AG04449 (cell line): ENCODE measurements at regions of chr5 and their contacts with region 1.

Region 1: GRCh38 chr5:140351609-140352334 is 5.4 kb upstream of the HBEGF start:
- DNase-seq: no peak
- H3K4me3 ChIP-seq: no peak overlapping the region
- CTCF ChIP-seq: peak; percentile 41

Region 2: GRCh38 chr5:139985733-139986132 is 366.0 kb before region 1 on chr5:
- CTCF ChIA-PET with region 1: no interaction called
- POLR2A ChIA-PET with region 1: no interaction called
- DNase-seq: peak; percentile 66
- H3K4me3 ChIP-seq: no peak overlapping the region
- CTCF ChIP-seq: no peak

Region 3: GRCh38 chr5:140220032-140220697 is 131.6 kb before region 1 on chr5:
- CTCF ChIA-PET with region 1: interaction called, 15 read pairs
- POLR2A ChIA-PET with region 1: interaction called, 4 read pairs
- DNase-seq: no peak
- H3K4me3 ChIP-seq: no peak overlapping the region
- CTCF ChIP-seq: no peak

Region 4: DNA sequence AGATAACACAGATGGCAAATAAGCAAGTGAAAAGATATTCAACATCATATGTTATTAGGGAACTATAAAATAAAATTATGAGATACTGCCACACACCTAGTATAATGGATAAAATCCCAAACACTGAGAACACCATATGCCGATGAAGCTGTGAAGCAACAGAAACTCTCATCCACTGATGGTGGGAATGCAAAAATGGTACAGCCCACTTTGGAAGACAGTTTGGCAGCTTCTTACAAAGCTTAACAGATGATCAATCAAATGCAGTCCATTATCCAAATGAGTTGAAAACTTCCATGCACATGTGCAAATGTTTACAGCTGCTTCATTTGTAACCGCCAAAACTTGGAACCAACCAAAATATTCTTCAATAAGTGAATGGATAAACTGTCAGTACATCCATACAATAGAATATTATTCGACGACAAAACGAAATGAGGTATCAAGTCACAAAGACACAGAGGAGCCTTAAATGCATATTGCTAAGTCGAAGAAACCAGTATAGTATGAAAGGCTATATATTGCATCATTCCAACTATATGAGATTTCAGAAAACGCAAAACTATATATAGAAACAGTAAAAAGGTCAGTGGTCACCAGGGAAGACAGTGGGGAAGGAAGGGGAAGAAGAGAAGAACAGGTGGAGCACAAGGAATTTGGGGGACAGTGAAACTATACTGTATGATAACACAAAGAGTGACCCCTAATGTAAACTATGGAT is 63.8 kb before region 1 on chr5:
- CTCF ChIA-PET with region 1: interaction called, 25 read pairs
- POLR2A ChIA-PET with region 1: interaction called, 6 read pairs
- DNase-seq: no peak
- H3K4me3 ChIP-seq: no peak overlapping the region
- CTCF ChIP-seq: no peak

Region 5: GRCh38 chr5:140302786-140303639 is 48.8 kb before region 1 on chr5 and contains the start of gene PFDN1:
- CTCF ChIA-PET with region 1: interaction called, 11 read pairs
- POLR2A ChIA-PET with region 1: interaction called, 12 read pairs
- DNase-seq: peak; percentile 69
- H3K4me3 ChIP-seq: peak within 1 kb of the TSS; percentile 83
- CTCF ChIP-seq: no peak

Region 6: GRCh38 chr5:140322751-140323731 is 28.7 kb before region 1 on chr5:
- CTCF ChIA-PET with region 1: interaction called, 28 read pairs
- POLR2A ChIA-PET with region 1: interaction called, 20 read pairs
- DNase-seq: peak; percentile 89
- H3K4me3 ChIP-seq: peak overlapping the region; percentile 21
- CTCF ChIP-seq: no peak

Region 7: GRCh38 chr5:140336388-140336787 is 15.4 kb before region 1 on chr5:
- CTCF ChIA-PET with region 1: interaction called, 34 read pairs
- POLR2A ChIA-PET with region 1: interaction called, 13 read pairs
- DNase-seq: no peak
- H3K4me3 ChIP-seq: no peak overlapping the region
- CTCF ChIP-seq: no peak

Region 8: DNA sequence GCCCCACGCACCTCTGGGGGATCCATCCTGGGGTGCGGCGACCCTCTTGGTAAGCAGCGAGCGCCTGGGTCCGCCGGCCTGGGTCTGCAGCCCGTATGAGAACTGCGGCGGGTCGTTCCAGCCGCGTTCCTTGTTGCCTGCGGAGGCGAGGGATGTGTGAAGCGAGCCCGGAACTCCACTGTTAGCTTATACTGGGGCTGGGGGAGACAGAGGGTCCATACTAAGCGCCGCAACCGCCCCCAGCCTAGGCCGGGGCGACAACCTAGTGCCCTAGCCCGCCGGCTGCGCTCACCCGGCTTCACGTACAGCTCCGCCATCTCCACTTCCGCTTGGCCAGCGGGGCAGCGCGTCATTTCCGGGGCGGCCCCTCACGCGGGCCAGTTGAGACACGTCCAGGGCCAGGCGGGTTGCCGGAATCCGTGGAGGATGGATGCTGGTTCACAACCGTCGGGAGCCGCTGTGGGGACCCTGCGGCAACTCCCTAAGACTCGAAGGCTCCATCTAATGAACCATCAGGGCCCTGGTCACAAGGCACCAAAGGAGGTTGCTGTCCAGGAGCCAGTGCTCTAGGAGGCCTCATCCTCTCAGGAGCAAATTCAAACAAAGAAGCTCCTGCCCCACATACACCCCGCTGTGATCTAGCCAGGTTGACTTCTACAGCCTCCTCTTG is 205.5 kb after region 1 on chr5 and contains the start of gene SRA1:
- CTCF ChIA-PET with region 1: no interaction called
- POLR2A ChIA-PET with region 1: no interaction called
- DNase-seq: no peak
- H3K4me3 ChIP-seq: peak within 1 kb of the TSS; percentile 86
- CTCF ChIP-seq: peak; percentile 4